ENCODE measurements at regions of chr7 and their contacts with region 1.

Region 1: DNA sequence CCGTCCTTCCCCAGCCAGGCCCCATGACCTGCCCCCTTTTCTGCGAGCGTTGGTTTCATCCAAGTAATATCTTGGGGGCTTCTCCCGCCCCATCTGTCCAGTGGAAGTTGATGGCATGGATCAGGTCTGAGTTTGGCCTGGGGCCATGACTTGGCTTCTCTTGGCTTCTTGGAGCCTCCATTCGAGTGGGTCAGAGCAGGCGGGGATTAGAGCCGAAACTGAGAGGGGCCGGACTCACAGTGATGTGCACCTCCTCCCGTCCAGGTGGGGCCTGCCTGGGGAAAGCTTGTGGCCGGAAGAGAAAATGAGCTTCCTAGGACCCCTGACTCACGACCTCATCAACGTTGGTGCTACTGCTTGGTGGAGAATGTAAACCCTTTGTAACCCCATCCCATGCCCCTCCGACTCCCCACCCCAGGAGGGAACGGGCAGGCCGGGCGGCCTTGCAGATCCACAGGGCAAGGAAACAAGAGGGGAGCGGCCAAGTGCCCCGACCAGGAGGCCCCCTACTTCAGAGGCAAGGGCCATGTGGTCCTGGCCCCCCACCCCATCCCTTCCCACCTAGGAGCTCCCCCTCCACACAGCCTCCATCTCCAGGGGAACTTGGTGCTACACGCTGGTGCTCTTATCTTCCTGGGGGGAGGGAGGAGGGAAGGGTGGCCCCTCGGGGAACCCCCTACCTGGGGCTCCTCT is 15.1 kb upstream of the LIMK1 start:
- DNase-seq: no peak
- H3K4me3 ChIP-seq: no peak overlapping the region
- H3K27ac ChIP-seq: no peak overlapping the region
- H3K4me1 ChIP-seq: no peaks in the 10 kb centered on the region
- H3K27me3 ChIP-seq: no peaks in the 10 kb centered on the region
- CTCF ChIP-seq: no peak
- POLR2A ChIP-seq: no peak

Region 2: GRCh38 chr7:73865738-73866445 is 202.6 kb before region 1 on chr7:
- CTCF ChIA-PET with region 1: interaction called, 3 read pairs
- POLR2A ChIA-PET with region 1: no interaction called
- dilution Hi-C with region 1: no loop called
- intact Hi-C with region 1: loop called (anchors 1 kb)
- DNase-seq: peak; percentile 62
- H3K4me3 ChIP-seq: no peak overlapping the region
- H3K27ac ChIP-seq: no peak overlapping the region
- H3K4me1 ChIP-seq: no peaks in the 10 kb centered on the region
- H3K27me3 ChIP-seq: no peaks in the 10 kb centered on the region
- CTCF ChIP-seq: peak; percentile 61 to 77
- POLR2A ChIP-seq: no peak

Region 3: DNA sequence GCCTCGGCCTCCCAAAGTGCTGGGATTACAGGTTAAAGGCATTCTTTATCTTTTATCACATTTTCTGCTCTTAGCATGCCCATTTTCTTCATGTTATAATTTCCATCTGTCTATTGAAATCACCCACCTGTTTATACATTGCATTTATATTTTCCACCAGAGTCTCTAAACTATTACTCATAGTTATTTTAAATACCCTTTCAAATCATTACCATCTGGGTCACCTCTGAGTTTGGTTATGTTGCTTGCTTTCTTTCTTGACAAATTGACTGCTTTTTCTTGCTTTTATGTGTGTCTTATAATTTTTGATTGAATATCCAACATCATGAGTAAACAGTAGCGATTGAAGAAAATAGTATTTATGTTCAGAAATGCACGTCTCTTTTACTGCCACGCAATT is 136.2 kb before region 1 on chr7:
- CTCF ChIA-PET with region 1: no interaction called
- POLR2A ChIA-PET with region 1: no interaction called
- dilution Hi-C with region 1: no loop called
- intact Hi-C with region 1: no loop called
- DNase-seq: no peak
- H3K4me3 ChIP-seq: no peak overlapping the region
- H3K27ac ChIP-seq: no peak overlapping the region
- H3K4me1 ChIP-seq: no peaks in the 10 kb centered on the region
- H3K27me3 ChIP-seq: peaks cover 2 to 3% of the 10 kb centered on the region in 2 experiments
- CTCF ChIP-seq: no peak
- POLR2A ChIP-seq: no peak

Region 4: GRCh38 chr7:74083117-74083876 is 14.8 kb after region 1 on chr7 and contains the start of gene LIMK1:
- CTCF ChIA-PET with region 1: interaction called, 18 read pairs
- POLR2A ChIA-PET with region 1: no interaction called
- dilution Hi-C with region 1: no loop called
- intact Hi-C with region 1: loop called (anchors 2 kb)
- DNase-seq: peak; percentile 74
- H3K4me3 ChIP-seq: peak within 1 kb of the TSS; percentile 67 to 84 (median 80)
- H3K27ac ChIP-seq: peak within 1 kb of the TSS; percentile 83
- H3K4me1 ChIP-seq: peaks cover 17% of the 10 kb centered on the region
- H3K27me3 ChIP-seq: no peaks in the 10 kb centered on the region
- CTCF ChIP-seq: no peak
- POLR2A ChIP-seq: peak; percentile 62
- total RNA-seq, gene LIMK1: 54.4 and 54.5 TPM in 2 replicates

Region 5: DNA sequence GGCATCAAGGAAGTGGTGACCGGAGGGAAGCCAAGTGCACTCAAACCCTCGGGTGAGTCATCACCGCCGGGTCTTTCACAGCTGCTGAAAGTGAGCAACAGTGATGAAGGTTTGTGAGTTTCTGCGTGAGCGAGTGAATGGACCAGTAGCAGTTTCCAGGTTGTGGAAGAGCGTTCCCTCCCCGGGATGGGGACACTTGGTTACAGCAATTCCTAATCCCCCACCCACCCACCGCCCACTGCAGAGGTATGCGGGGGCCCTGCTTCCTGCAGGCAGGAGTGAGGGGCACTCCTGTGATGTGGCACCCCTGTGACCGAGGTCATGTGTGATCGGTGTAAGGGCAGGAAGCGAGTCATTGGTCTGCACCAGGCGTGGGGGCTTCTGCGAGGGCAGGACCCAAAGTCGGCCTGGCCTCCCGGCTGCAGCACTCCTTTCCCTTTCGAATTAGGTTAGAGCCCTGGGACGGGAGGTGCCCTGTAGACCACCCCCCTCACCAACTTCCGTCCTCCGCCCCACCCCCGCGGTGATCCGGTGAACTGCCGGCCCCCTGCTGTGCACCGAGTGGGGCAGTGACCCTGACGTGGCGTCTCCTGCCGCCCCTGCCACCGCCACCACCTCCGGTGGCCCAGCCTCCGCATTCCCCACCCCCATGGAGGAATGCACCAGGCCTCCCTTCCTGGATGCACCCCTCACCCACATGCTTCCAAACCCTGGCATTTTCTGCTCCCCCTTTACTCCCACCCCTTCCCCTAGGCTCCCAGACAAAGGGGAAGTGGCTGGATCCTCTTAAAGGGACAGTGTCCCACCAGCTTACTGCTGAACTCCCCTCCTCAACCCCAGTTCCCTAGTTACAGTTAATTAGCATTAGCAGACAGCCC is 25.9 kb after region 1 on chr7:
- CTCF ChIA-PET with region 1: interaction called, 10 read pairs
- POLR2A ChIA-PET with region 1: interaction called, 10 read pairs
- dilution Hi-C with region 1: no loop called
- intact Hi-C with region 1: no loop called
- DNase-seq: peak; percentile 89
- H3K4me3 ChIP-seq: peak overlapping the region in 2 of 3 experiments; percentile 0 to 29
- H3K27ac ChIP-seq: peak overlapping the region; percentile 83
- H3K4me1 ChIP-seq: peaks cover 34% of the 10 kb centered on the region
- H3K27me3 ChIP-seq: no peaks in the 10 kb centered on the region
- CTCF ChIP-seq: no peak
- POLR2A ChIP-seq: peak; percentile 21

Region 6: GRCh38 chr7:74173866-74174605 is 105.5 kb after region 1 on chr7 and contains the start of gene EIF4H:
- CTCF ChIA-PET with region 1: no interaction called
- POLR2A ChIA-PET with region 1: interaction called, 3 read pairs
- dilution Hi-C with region 1: no loop called
- intact Hi-C with region 1: loop called (anchors 2 kb)
- DNase-seq: peak; percentile 96
- H3K4me3 ChIP-seq: peak within 1 kb of the TSS; percentile 72 to 98 (median 95)
- H3K27ac ChIP-seq: peak within 1 kb of the TSS; percentile 84
- H3K4me1 ChIP-seq: peaks cover 33% of the 10 kb centered on the region
- H3K27me3 ChIP-seq: no peaks in the 10 kb centered on the region
- CTCF ChIP-seq: no peak
- POLR2A ChIP-seq: peak; percentile 92
- total RNA-seq, gene EIF4H: 415 and 434 TPM in 2 replicates

Region 7: DNA sequence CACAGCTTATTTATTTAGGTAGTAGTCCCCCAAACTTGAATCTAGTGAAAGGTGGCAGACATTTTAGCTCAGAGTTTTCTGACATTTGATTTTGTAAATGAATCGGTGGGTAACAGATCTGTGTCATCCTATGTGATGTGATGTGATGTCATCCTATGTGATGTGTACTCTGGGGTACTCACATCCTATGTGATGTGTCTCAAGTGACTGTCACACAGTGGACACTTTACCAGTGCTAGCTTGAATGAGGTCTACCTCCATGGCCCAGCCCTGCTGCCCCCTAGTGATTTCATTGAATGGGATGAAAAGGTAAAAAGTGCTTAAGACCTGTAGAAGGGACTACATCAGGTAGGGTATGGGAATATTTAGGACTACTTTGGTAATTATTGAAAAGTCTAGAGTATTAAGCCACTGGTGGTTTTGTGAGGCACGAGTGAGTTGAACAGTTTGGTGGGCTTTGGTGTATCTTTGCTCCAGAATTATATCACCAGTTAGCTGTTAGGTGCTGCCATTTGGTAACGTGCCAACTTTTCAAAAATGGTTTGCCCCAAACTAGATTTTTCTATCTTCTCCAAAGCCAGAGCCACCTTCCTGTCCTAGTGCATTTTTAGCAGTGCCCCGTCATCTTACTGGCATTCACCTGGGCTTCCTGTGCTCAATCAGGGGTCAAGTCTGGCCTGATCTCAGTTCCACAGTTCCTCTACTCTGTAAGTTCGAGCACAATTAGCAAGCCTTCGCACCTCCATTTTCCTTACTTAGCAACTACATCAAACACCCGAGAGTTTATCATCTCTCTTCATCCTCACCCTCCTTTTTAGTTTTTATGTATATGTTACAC is 115.3 kb after region 1 on chr7:
- CTCF ChIA-PET with region 1: interaction called, 11 read pairs
- POLR2A ChIA-PET with region 1: no interaction called
- dilution Hi-C with region 1: no loop called
- intact Hi-C with region 1: no loop called
- DNase-seq: peak; percentile 36
- H3K4me3 ChIP-seq: peak overlapping the region in 1 of 3 experiments; percentile 26
- H3K27ac ChIP-seq: peak overlapping the region; percentile 13
- H3K4me1 ChIP-seq: peaks cover 51% of the 10 kb centered on the region
- H3K27me3 ChIP-seq: no peaks in the 10 kb centered on the region
- CTCF ChIP-seq: peak; percentile 3 to 24
- POLR2A ChIP-seq: no peak

Region 8: GRCh38 chr7:74401137-74401859 is 332.8 kb after region 1 on chr7:
- CTCF ChIA-PET with region 1: interaction called, 32 read pairs
- POLR2A ChIA-PET with region 1: no interaction called
- dilution Hi-C with region 1: no loop called
- intact Hi-C with region 1: loop called (anchors 2 kb)
- DNase-seq: peak; percentile 52
- H3K4me3 ChIP-seq: no peak overlapping the region
- H3K27ac ChIP-seq: no peak overlapping the region
- H3K4me1 ChIP-seq: no peaks in the 10 kb centered on the region
- H3K27me3 ChIP-seq: no peaks in the 10 kb centered on the region
- CTCF ChIP-seq: peak; percentile 88 to 95
- POLR2A ChIP-seq: no peak

Measured in endothelial cell of umbilical vein (primary cell).